HEK293 (cell line): ENCODE measurements at regions of chr2 and their contacts with region 1.

Region 1: GRCh38 chr2:165401285-165401852 is 68.1 kb upstream of the CSRNP3 start:
- H3K4me3 ChIP-seq: no peak overlapping the region
- H3K27ac ChIP-seq: no peak overlapping the region
- H3K4me1 ChIP-seq: peaks cover 15% of the 10 kb centered on the region
- CTCF ChIP-seq: peak; percentile 42; the same call in 1 of the 2 replicates

Region 2: GRCh38 chr2:165499131-165499530 is 97.8 kb after region 1 on chr2:
- CTCF ChIA-PET with region 1: interaction called, 10 read pairs
- POLR2A ChIA-PET with region 1: no interaction called
- H3K4me3 ChIP-seq: no peak overlapping the region
- H3K27ac ChIP-seq: no peak overlapping the region
- H3K4me1 ChIP-seq: no peaks in the 10 kb centered on the region
- CTCF ChIP-seq: no peak

Region 3: GRCh38 chr2:165778653-165779451 is 377.5 kb after region 1 on chr2:
- CTCF ChIA-PET with region 1: interaction called, 14 read pairs
- POLR2A ChIA-PET with region 1: interaction called, 6 read pairs
- H3K4me3 ChIP-seq: no peak overlapping the region
- H3K27ac ChIP-seq: no peak overlapping the region
- H3K4me1 ChIP-seq: peaks cover 25% of the 10 kb centered on the region; the same call in 1 of the 2 replicates
- CTCF ChIP-seq: peak; percentile 46